ENCODE measurements at regions of chr2 and their contacts with region 1.

Region 1: DNA sequence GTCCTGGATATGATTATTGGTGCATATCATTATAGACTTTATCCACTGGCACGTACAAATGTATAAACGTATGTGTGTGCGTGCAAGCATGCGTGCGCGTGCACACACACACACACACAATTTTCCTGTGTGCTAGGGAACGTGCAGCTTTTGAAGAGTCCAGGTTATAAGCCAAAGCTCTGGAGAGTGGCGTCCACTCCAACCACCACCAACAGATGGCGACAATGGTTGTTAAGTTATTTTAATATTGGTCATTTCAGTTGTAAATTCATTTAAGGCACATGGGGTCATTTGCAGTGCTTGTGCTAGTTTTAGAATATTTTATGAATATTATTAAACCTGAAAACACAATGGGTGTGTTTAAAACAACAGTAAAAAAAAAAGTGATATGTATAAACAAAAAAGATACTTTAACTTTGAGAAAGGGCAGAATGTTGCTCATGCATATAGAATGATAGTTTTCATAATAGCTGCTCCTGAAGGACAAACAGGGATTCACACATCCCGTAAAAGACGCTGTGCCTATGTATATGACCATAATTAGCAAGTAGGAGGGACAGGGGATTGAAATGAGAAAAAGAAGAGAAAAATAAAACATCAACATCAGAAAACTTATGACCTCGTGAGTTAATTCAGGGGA is 124.2 kb upstream of the ITGB6 start:
- DNase-seq: peak; percentile 40 to 67
- ATAC-seq: peak; percentile 63 to 72 (median 67)
- H3K4me3 ChIP-seq: no peak overlapping the region
- H3K4me3 Mint-ChIP-seq: no peak overlapping the region
- H3K27ac ChIP-seq: no peak overlapping the region
- H3K27ac Mint-ChIP-seq: peak overlapping the region; percentile 49 to 88
- H3K4me1 ChIP-seq: peaks cover 19% of the 10 kb centered on the region
- H3K4me1 Mint-ChIP-seq: peaks cover 80 to 86% of the 10 kb centered on the region in 2 donors
- H3K27me3 ChIP-seq: no peaks in the 10 kb centered on the region
- H3K27me3 Mint-ChIP-seq: no peaks in the 10 kb centered on the region
- CTCF ChIP-seq: peak; percentile 75

Region 2: GRCh38 chr2:160493227-160494028 is 169.1 kb after region 1 on chr2 and contains the start of gene RBMS1:
- intact Hi-C with region 1: loop called (anchors 10 kb)
- DNase-seq: peak; percentile 26 to 67
- ATAC-seq: peak; percentile 52 to 64 (median 55)
- H3K4me3 ChIP-seq: peak within 1 kb of the TSS; percentile 69
- H3K4me3 Mint-ChIP-seq: peak within 1 kb of the TSS; percentile 95
- H3K27ac ChIP-seq: peak within 1 kb of the TSS; percentile 38
- H3K27ac Mint-ChIP-seq: peak within 1 kb of the TSS; percentile 54 to 74
- H3K4me1 ChIP-seq: peaks cover 7% of the 10 kb centered on the region
- H3K4me1 Mint-ChIP-seq: peaks cover 0 to 10% of the 10 kb centered on the region in 2 donors
- H3K27me3 ChIP-seq: peaks cover 8% of the 10 kb centered on the region
- H3K27me3 Mint-ChIP-seq: peaks cover 9 to 18% of the 10 kb centered on the region in 2 donors
- CTCF ChIP-seq: no peak
- total RNA-seq, gene RBMS1: 111 to 167 (median 132) TPM

Region 3: DNA sequence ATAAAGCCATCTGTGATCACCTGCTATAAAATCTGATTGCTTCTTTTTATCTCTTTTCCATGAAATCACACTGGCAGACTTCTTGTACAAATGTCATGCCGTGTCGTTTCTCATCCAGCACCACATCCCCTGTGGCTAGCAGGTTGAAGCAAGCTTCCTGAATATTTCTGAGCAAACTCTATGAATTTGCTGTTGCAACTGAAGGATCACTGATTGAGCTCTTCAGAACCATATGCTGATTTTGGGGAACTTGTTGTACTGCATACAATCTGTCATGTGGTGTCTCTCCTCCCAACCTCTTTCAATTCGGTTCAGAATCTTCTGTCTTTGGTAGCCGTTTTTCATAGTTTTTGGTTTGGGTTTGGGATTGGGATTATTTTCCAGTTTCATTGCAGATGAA is 227.0 kb after region 1 on chr2:
- intact Hi-C with region 1: no loop called
- DNase-seq: peak in 1 of 2 donors; percentile 6
- ATAC-seq: no peak
- H3K4me3 ChIP-seq: no peak overlapping the region
- H3K4me3 Mint-ChIP-seq: no peak overlapping the region
- H3K27ac ChIP-seq: no peak overlapping the region
- H3K27ac Mint-ChIP-seq: no peak overlapping the region
- H3K4me1 ChIP-seq: no peaks in the 10 kb centered on the region
- H3K4me1 Mint-ChIP-seq: peaks cover 0 to 5% of the 10 kb centered on the region in 2 donors
- H3K27me3 ChIP-seq: peaks cover 2% of the 10 kb centered on the region
- H3K27me3 Mint-ChIP-seq: peaks cover 2 to 9% of the 10 kb centered on the region in 2 donors
- CTCF ChIP-seq: no peak

Region 4: DNA sequence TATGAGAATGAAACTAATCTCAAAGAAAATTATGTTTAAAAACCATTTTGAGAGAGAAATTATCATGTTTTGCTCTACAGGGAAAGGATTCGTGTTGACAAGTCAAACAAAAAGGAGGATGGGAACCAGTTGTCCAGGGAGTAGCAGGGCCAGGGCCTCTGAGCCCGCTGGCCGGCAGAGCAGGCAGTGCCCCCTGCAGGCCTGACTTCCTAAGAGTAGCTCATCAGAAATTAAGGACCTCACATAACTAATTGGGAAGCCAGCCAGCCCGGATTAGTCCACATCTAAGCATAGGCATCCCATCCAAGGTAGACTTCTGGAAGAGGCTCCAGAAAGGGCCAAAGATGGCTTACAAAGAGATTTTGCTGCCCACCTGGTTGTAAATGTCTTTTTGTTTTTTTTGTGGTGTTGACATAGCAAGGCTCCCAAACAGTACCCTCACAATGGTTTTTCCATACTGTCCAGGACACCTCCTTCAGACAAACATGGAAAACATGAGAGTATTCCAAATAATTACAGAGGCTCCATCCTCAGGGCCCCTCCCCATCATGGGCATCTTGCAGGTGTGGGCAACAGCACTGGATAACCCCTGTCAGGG is 594.7 kb after region 1 on chr2:
- intact Hi-C with region 1: loop called (anchors 1 kb)
- DNase-seq: peak; percentile 19 to 53
- ATAC-seq: peak; percentile 31 to 67 (median 58)
- H3K4me3 ChIP-seq: no peak overlapping the region
- H3K4me3 Mint-ChIP-seq: no peak overlapping the region
- H3K27ac ChIP-seq: no peak overlapping the region
- H3K27ac Mint-ChIP-seq: no peak overlapping the region
- H3K4me1 ChIP-seq: no peaks in the 10 kb centered on the region
- H3K4me1 Mint-ChIP-seq: no peaks in the 10 kb centered on the region
- H3K27me3 ChIP-seq: peaks cover 2% of the 10 kb centered on the region
- H3K27me3 Mint-ChIP-seq: peaks cover 0 to 5% of the 10 kb centered on the region in 2 donors
- CTCF ChIP-seq: peak; percentile 29

Region 5: GRCh38 chr2:160994141-160995002 is 670.1 kb after region 1 on chr2:
- intact Hi-C with region 1: loop called (anchors 1 kb)
- DNase-seq: peak; percentile 36 to 89
- ATAC-seq: peak; percentile 85 to 95 (median 94)
- H3K4me3 ChIP-seq: no peak overlapping the region
- H3K4me3 Mint-ChIP-seq: no peak overlapping the region
- H3K27ac ChIP-seq: no peak overlapping the region
- H3K27ac Mint-ChIP-seq: peak overlapping the region in 1 of 2 donors; percentile 5
- H3K4me1 ChIP-seq: no peaks in the 10 kb centered on the region
- H3K4me1 Mint-ChIP-seq: peaks cover 9 to 10% of the 10 kb centered on the region in 2 donors
- H3K27me3 ChIP-seq: no peaks in the 10 kb centered on the region
- H3K27me3 Mint-ChIP-seq: no peaks in the 10 kb centered on the region
- CTCF ChIP-seq: peak; percentile 87

Region 6: DNA sequence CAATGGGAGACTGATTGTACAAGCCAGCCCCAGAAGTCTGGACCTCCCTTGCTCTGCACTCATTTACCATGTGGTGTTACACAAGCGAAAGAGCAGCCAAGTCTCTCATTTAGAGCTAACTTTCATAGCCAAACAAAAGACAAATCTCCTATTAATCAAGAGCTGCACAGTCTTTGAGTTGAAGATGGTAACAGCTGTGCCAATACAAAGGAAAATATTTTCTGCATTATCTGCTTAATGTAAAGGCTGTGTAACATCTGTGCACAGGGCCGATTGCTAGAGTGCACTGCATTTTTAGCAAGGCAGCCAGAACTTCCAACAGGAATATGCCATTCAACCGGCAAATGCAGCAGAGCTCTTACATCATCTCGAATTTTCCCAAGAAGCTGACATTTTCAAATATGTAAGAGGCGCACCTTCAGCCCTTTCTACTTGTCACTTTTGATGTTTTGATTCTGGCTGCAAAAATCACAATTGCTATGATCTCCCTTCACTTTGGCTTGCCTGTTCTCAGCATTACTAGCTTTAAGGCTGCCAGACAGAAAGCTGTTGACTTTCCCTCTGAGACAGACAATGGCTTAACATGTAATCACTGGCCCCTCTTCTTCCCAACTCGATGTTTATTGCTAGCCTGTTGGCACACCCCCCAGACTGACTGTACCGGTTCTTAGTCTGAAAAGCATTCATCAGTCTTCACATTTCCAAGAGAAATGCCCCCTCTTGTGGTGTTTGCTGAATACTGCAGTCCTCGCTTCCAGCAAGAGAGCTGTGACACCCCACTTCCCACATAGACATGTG is 739.1 kb after region 1 on chr2:
- intact Hi-C with region 1: loop called (anchors 10 kb)
- DNase-seq: peak; percentile 27 to 81
- ATAC-seq: peak; percentile 87 to 96 (median 92)
- H3K4me3 ChIP-seq: no peak overlapping the region
- H3K4me3 Mint-ChIP-seq: no peak overlapping the region
- H3K27ac ChIP-seq: no peak overlapping the region
- H3K27ac Mint-ChIP-seq: no peak overlapping the region
- H3K4me1 ChIP-seq: no peaks in the 10 kb centered on the region
- H3K4me1 Mint-ChIP-seq: peaks cover 6% of the 10 kb centered on the region in 2 donors
- H3K27me3 ChIP-seq: no peaks in the 10 kb centered on the region
- H3K27me3 Mint-ChIP-seq: peaks cover 2 to 39% of the 10 kb centered on the region in 2 donors
- CTCF ChIP-seq: peak; percentile 97

Measured in natural killer cell (primary cell).